Testis (tissue), 5 donors: ENCODE measurements at regions of chr11 and their contacts with region 1.

Region 1: GRCh38 chr11:4636962-4637661 is at the start of gene OR51D1:
- DNase-seq: peak; percentile 85
- H3K4me3 ChIP-seq: peak within 1 kb of the TSS; percentile 29 to 31
- H3K27ac ChIP-seq: no peak within 1 kb of the TSS
- H3K4me1 ChIP-seq: peaks cover 3% of the 10 kb centered on the region
- H3K27me3 ChIP-seq: no peaks in the 10 kb centered on the region
- CTCF ChIP-seq: peak; percentile 72 to 84 (median 83)
- POLR2A ChIP-seq: no peak
- total RNA-seq, gene OR51D1: 0.63 TPM in 1 of 2 donors, not detected in the other

Region 2: DNA sequence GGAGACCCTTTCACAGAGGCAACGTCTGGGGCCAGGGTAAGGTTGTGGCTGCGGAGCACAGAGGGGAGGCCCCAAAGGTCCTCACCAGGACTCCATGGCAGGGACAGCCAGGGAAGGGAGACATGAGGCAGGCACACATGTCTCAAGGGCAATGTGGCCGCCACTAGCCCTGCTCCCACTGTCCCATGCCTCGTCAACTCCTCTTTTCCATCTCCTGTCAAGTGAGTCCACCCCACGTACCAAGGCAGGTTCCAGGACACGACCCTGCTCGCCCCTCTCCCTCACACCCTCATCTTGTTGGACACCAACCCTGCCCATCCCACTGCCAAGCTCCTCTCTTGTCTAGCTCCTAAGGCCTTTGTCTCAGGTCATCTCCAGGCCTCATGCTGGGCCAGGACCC is 469.4 kb before region 1 on chr11:
- intact Hi-C with region 1: no loop called
- DNase-seq: no peak
- H3K4me3 ChIP-seq: no peak overlapping the region
- H3K27ac ChIP-seq: no peak overlapping the region
- H3K4me1 ChIP-seq: no peaks in the 10 kb centered on the region
- H3K27me3 ChIP-seq: no peaks in the 10 kb centered on the region
- CTCF ChIP-seq: no peak
- POLR2A ChIP-seq: no peak

Region 3: GRCh38 chr11:4522339-4522738 is 114.8 kb before region 1 on chr11:
- intact Hi-C with region 1: no loop called
- DNase-seq: no peak
- H3K4me3 ChIP-seq: no peak overlapping the region
- H3K27ac ChIP-seq: no peak overlapping the region
- H3K4me1 ChIP-seq: no peaks in the 10 kb centered on the region
- H3K27me3 ChIP-seq: no peaks in the 10 kb centered on the region
- CTCF ChIP-seq: no peak
- POLR2A ChIP-seq: no peak

Region 4: DNA sequence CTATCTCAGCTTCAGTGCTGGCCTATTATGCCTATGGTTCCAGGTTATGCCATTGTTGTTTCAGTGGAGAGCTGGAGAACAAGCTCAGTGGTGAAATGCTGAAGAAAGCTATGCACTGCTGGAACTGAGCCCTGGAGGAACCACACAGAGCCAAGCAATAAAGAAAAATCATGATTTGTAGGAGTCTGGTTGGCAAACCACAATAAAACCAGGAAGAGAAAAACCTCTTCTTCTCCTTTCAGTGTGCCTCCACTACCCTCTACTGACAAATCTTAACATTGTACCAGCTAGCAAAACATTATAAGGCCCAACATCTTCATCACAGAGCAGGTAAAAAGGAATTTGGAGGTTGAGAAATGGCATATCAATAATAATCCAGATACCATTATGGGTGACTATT is 189.3 kb after region 1 on chr11:
- intact Hi-C with region 1: loop called (anchors 5 kb)
- DNase-seq: no peak
- H3K4me3 ChIP-seq: no peak overlapping the region
- H3K27ac ChIP-seq: no peak overlapping the region
- H3K4me1 ChIP-seq: no peaks in the 10 kb centered on the region
- H3K27me3 ChIP-seq: no peaks in the 10 kb centered on the region
- CTCF ChIP-seq: peak in 1 of 3 experiments; percentile 34
- POLR2A ChIP-seq: no peak

Region 5: GRCh38 chr11:5004424-5005274 is 367.5 kb after region 1 on chr11:
- intact Hi-C with region 1: loop called (anchors 10 kb)
- DNase-seq: peak; percentile 82
- H3K4me3 ChIP-seq: no peak overlapping the region
- H3K27ac ChIP-seq: no peak overlapping the region
- H3K4me1 ChIP-seq: no peaks in the 10 kb centered on the region
- H3K27me3 ChIP-seq: no peaks in the 10 kb centered on the region
- CTCF ChIP-seq: peak in 2 of 3 experiments; percentile 45 to 53
- POLR2A ChIP-seq: no peak